Mucosa of descending colon (tissue), 3 donors: ENCODE measurements at regions of chr1 and their contacts with region 1.

Region 1: GRCh38 chr1:160607011-160607671 is 27.8 kb upstream of the CD84 start:
- DNase-seq: peak in 1 of 3 donors; percentile 70
- ATAC-seq: peak; percentile 99
- H3K4me3 ChIP-seq: no peak overlapping the region
- H3K4me1 ChIP-seq: no peaks in the 10 kb centered on the region
- CTCF ChIP-seq: peak; percentile 41

Region 2: DNA sequence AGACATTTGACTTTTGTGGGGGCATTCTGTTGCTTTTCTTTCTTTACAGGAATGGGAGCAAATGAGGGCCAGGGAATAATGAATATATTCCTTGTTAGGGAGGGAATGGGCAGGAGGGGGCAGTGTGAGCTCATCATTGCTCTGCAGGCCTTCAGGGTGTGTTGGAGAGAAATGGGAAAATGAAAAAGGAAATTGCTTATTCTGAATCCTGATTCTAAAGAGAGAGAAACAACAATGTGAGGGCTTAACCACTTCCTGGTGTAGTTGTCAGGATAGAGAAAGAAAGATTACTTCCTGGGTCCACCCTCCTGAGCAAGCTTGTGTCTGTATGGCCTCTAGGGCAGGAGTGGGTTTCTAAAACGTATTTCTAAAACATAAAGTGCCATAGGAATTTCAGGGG is 178.5 kb before region 1 on chr1:
- intact Hi-C with region 1: loop called in 1 of 2 experiments (anchors 2 kb)
- DNase-seq: peak; percentile 51 to 76 (median 66)
- ATAC-seq: peak; percentile 86
- H3K4me3 ChIP-seq: no peak overlapping the region
- H3K4me1 ChIP-seq: peaks cover 15% of the 10 kb centered on the region
- CTCF ChIP-seq: peak; percentile 46